Natural killer cell (primary cell): ENCODE measurements at regions of chr6 and their contacts with region 1.

Region 1: DNA sequence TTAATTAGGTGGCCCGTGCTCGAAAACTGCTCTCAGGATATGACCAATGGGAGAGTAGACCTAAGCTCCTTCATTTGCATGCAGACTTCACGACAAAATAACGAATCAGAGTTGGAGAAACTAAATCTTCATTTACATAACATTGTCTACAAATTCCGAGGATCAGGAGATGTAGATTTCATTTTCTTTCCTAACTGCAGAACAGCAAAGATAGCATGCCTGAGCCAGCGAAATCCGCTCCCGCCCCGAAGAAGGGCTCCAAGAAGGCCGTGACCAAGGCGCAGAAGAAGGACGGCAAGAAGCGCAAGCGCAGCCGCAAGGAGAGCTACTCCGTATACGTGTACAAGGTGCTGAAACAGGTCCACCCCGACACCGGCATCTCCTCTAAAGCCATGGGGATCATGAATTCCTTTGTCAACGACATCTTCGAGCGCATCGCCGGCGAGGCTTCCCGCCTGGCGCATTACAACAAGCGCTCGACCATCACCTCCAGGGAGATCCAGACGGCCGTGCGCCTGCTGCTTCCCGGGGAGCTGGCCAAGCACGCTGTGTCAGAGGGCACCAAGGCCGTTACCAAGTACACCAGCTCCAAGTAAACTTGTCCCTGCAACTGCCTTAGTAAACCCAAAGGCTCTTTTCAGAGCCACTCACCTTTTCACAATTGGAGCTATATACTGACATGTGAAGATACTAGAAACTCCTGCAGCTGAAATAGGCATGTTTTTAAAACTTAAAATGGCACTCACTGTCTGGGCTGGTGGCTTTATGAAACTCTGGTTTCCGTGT is 96.5 kb downstream of the HFE start:
- DNase-seq: peak; percentile 50 to 87
- ATAC-seq: peak; percentile 86 to 90 (median 88)
- H3K4me3 ChIP-seq: peak overlapping the region; percentile 60
- H3K4me3 Mint-ChIP-seq: peak overlapping the region; percentile 93
- H3K27ac ChIP-seq: peak overlapping the region; percentile 58
- H3K27ac Mint-ChIP-seq: peak overlapping the region; percentile 89 to 90
- H3K4me1 ChIP-seq: peaks cover 28% of the 10 kb centered on the region
- H3K4me1 Mint-ChIP-seq: peaks cover 27 to 50% of the 10 kb centered on the region in 2 donors
- H3K27me3 ChIP-seq: no peaks in the 10 kb centered on the region
- H3K27me3 Mint-ChIP-seq: no peaks in the 10 kb centered on the region
- CTCF ChIP-seq: no peak

Region 2: DNA sequence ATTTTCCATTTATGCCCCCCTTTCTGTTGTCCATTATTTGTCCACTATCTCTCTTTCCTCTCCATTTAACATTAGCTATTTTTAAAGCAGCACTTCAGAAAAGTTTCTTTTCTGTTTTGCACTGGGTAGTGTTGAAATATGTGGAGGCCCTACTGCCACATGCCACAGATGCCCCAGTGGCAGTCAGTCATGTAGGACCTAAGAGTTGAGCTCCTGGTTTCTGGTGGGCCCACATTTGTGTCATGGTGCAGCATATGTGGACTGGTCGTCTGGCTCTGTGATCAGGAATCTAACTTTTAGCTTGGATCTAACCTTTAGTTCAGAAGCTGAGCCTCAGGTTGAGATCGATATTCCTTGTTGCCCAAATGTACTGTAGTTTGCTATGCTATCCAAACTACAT is 41.7 kb before region 1 on chr6:
- intact Hi-C with region 1: no loop called
- DNase-seq: no peak
- ATAC-seq: no peak
- H3K4me3 ChIP-seq: no peak overlapping the region
- H3K4me3 Mint-ChIP-seq: no peak overlapping the region
- H3K27ac ChIP-seq: no peak overlapping the region
- H3K27ac Mint-ChIP-seq: no peak overlapping the region
- H3K4me1 ChIP-seq: no peaks in the 10 kb centered on the region
- H3K4me1 Mint-ChIP-seq: no peaks in the 10 kb centered on the region
- H3K27me3 ChIP-seq: no peaks in the 10 kb centered on the region
- H3K27me3 Mint-ChIP-seq: no peaks in the 10 kb centered on the region
- CTCF ChIP-seq: no peak

Region 3: GRCh38 chr6:26240154-26241032 is 56.6 kb after region 1 on chr6:
- intact Hi-C with region 1: loop called (anchors 2 kb)
- DNase-seq: peak; percentile 67 to 88
- ATAC-seq: peak; percentile 74 to 86 (median 82)
- H3K4me3 ChIP-seq: peak overlapping the region; percentile 65
- H3K4me3 Mint-ChIP-seq: peak overlapping the region; percentile 91
- H3K27ac ChIP-seq: peak overlapping the region; percentile 95
- H3K27ac Mint-ChIP-seq: peak overlapping the region; percentile 93 to 96
- H3K4me1 ChIP-seq: peaks cover 20% of the 10 kb centered on the region
- H3K4me1 Mint-ChIP-seq: peaks cover 16 to 23% of the 10 kb centered on the region in 2 donors
- H3K27me3 ChIP-seq: no peaks in the 10 kb centered on the region
- H3K27me3 Mint-ChIP-seq: no peaks in the 10 kb centered on the region
- CTCF ChIP-seq: no peak